Naive thymus-derived CD4-positive, alpha-beta T cell (primary cell): ENCODE measurements at regions of chr22 and their contacts with region 1.

Region 1: GRCh38 chr22:36387752-36388518 is at the start of gene MYH9:
- DNase-seq: peak; percentile 93 to 99 (median 99)
- ATAC-seq: peak; percentile 93
- H3K4me3 ChIP-seq: peak within 1 kb of the TSS; percentile 97
- H3K4me3 Mint-ChIP-seq: peak within 1 kb of the TSS; percentile 87 to 99 (median 93)
- H3K27ac ChIP-seq: peak within 1 kb of the TSS; percentile 86
- H3K27ac Mint-ChIP-seq: peak within 1 kb of the TSS; percentile 93 to 97 (median 94)
- H3K4me1 ChIP-seq: peaks cover 20 to 21% of the 10 kb centered on the region in 2 donors
- H3K4me1 Mint-ChIP-seq: peaks cover 18 to 48% (median 35%) of the 10 kb centered on the region in 7 donors
- H3K27me3 ChIP-seq: no peaks in the 10 kb centered on the region
- H3K27me3 Mint-ChIP-seq: no peaks in the 10 kb centered on the region
- total RNA-seq, gene MYH9: 650 to 900 (median 803) TPM

Region 2: DNA sequence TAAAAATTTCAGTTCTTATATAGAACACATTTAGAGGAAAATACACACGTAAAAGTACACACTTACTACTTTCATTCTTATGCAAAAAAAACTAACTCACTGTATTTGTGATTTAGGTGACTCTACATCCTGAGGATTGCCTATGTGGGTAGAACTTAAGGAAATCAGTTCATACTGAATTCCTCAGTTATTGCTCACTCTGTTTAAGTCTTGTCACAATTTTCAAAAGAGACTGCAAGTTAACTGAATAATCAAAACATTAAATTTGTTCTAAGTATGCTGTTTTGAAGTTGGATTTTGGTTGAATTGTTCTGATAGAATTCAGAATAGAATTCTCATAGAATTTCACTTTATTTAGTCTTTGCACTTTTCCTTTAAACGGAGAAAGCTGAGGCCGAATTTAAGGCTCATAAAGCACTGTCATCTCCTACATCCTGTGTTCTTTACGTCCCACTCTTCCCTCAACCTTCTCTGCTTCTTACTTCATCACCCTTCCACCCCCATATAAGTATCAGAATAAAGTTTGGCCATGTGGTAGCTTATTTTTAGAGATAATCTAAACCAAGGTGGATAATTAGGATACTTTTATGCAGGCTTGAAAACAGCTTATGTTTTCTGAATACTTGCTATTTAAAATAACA is 610.5 kb before region 1 on chr22:
- CTCF ChIA-PET with region 1: no interaction called
- POLR2A ChIA-PET with region 1: no interaction called
- intact Hi-C with region 1: no loop called
- DNase-seq: no peak
- ATAC-seq: no peak
- H3K4me3 ChIP-seq: no peak overlapping the region
- H3K4me3 Mint-ChIP-seq: no peak overlapping the region
- H3K27ac ChIP-seq: no peak overlapping the region
- H3K27ac Mint-ChIP-seq: no peak overlapping the region
- H3K4me1 ChIP-seq: no peaks in the 10 kb centered on the region
- H3K4me1 Mint-ChIP-seq: no peaks in the 10 kb centered on the region
- H3K27me3 ChIP-seq: no peaks in the 10 kb centered on the region
- H3K27me3 Mint-ChIP-seq: peaks cover 0 to 17% (median 0%) of the 10 kb centered on the region in 5 donors

Region 3: GRCh38 chr22:36239401-36240171 is 148.3 kb before region 1 on chr22 and contains the start of gene APOL2:
- CTCF ChIA-PET with region 1: no interaction called
- POLR2A ChIA-PET with region 1: no interaction called
- intact Hi-C with region 1: loop called in 1 of 2 experiments (anchors 5 kb)
- DNase-seq: peak; percentile 52 to 88 (median 79)
- ATAC-seq: peak; percentile 99
- H3K4me3 ChIP-seq: peak within 1 kb of the TSS; percentile 94
- H3K4me3 Mint-ChIP-seq: peak within 1 kb of the TSS; percentile 93 to 99 (median 99)
- H3K27ac ChIP-seq: peak within 1 kb of the TSS; percentile 76
- H3K27ac Mint-ChIP-seq: peak within 1 kb of the TSS; percentile 94 to 99 (median 98)
- H3K4me1 ChIP-seq: peaks cover 23 to 33% of the 10 kb centered on the region in 2 donors
- H3K4me1 Mint-ChIP-seq: peaks cover 44 to 55% (median 53%) of the 10 kb centered on the region in 7 donors
- H3K27me3 ChIP-seq: no peaks in the 10 kb centered on the region
- H3K27me3 Mint-ChIP-seq: peaks cover 0 to 10% (median 0%) of the 10 kb centered on the region in 5 donors
- total RNA-seq, gene APOL2: 30.1 to 133 (median 66.9) TPM

Region 4: DNA sequence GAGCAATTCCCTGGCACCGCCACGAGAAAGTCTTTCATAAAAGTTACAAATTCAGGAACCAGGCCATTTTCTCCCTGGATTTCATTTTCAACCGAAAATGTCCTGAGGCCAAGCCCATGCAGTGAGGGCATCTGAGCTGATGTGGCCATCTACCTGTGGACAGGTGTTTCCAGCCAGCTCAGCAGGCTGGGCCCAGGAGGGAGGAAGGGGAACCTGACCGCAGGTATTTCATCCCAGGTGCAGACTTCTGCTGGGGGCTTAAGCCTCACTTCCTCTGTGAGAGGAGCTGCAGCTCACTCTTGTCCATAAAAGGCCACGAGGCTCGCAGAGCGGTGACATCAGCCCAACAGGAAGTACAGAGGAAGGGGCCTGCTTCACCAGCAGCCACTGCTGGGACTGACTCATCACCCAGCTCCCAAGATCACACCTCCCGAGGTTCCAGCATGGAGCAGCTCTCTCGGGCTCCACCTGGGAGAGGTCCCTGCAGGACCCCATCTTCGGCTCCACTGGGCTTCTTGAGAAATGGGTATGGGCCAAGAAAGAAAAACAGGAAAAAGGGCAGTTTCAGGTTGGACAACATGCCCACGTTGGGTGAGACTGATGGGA is 56.5 kb before region 1 on chr22:
- CTCF ChIA-PET with region 1: interaction called, 10 read pairs
- POLR2A ChIA-PET with region 1: interaction called, 1,512 read pairs
- intact Hi-C with region 1: loop called (anchors 1 kb)
- DNase-seq: peak; percentile 42 to 83 (median 73)
- ATAC-seq: peak; percentile 78
- H3K4me3 ChIP-seq: peak overlapping the region; percentile 57
- H3K4me3 Mint-ChIP-seq: peak overlapping the region; percentile 83 to 95 (median 92)
- H3K27ac ChIP-seq: peak overlapping the region; percentile 82
- H3K27ac Mint-ChIP-seq: peak overlapping the region; percentile 96 to 100 (median 99)
- H3K4me1 ChIP-seq: peaks cover 87 to 92% of the 10 kb centered on the region in 2 donors
- H3K4me1 Mint-ChIP-seq: peaks cover 84 to 100% (median 98%) of the 10 kb centered on the region in 7 donors
- H3K27me3 ChIP-seq: no peaks in the 10 kb centered on the region
- H3K27me3 Mint-ChIP-seq: no peaks in the 10 kb centered on the region

Region 5: DNA sequence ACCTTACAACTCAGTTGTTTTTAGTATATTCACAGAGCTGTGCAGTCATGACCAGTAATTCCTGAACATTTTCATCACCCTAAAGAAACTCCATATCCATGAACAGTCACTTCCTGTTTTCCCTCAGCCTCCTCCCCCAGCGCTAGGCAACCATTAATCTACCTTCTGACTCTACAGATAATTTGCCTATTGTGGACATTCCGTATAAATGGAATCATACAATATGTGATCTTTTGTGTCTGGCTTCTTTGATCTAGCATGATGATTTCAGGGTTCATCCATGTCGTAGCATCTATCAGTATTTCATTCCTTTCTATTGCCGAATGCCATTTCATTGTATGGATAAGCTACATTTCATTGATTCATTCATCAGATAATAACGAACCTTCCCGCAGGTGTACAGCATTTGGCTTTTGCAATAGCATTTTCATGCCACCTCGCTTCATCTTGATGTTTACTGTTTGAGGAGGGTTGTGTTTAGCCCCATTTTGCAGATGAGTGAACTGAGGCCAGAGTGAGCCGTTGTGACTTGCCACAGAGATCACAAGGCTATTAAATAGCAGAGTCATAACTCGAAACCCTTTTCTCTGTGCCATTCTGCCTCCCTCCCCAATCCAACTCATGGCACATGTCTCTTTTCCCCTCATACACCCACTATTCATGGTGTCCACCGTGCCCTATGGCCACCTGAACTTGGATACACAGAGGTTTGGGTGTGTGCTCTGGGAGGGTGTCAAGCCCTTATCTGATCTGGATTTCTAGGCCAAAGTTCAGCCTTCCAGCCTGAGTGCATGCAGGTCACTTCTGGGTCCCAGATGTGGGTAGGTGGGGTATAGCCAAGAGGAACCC is 10.9 kb after region 1 on chr22:
- CTCF ChIA-PET with region 1: no interaction called
- POLR2A ChIA-PET with region 1: interaction called, 15 read pairs
- intact Hi-C with region 1: loop called in 1 of 2 experiments (anchors 1 kb)
- DNase-seq: no peak
- ATAC-seq: no peak
- H3K4me3 ChIP-seq: no peak overlapping the region
- H3K4me3 Mint-ChIP-seq: peak overlapping the region in 1 of 10 donors; percentile 31
- H3K27ac ChIP-seq: no peak overlapping the region
- H3K27ac Mint-ChIP-seq: peak overlapping the region in 4 of 9 donors; percentile 6 to 33 (median 17)
- H3K4me1 ChIP-seq: peaks cover 5 to 14% of the 10 kb centered on the region in 2 donors
- H3K4me1 Mint-ChIP-seq: peaks cover 21 to 33% (median 28%) of the 10 kb centered on the region in 7 donors
- H3K27me3 ChIP-seq: no peaks in the 10 kb centered on the region
- H3K27me3 Mint-ChIP-seq: no peaks in the 10 kb centered on the region

Region 6: GRCh38 chr22:36454916-36455570 is 67.1 kb after region 1 on chr22:
- CTCF ChIA-PET with region 1: no interaction called
- POLR2A ChIA-PET with region 1: interaction called, 13 read pairs
- intact Hi-C with region 1: loop called (anchors 1 kb)
- DNase-seq: peak; percentile 87 to 97 (median 92)
- ATAC-seq: peak; percentile 83
- H3K4me3 ChIP-seq: peak overlapping the region; percentile 83
- H3K4me3 Mint-ChIP-seq: peak overlapping the region; percentile 68 to 87 (median 78)
- H3K27ac ChIP-seq: peak overlapping the region; percentile 99
- H3K27ac Mint-ChIP-seq: peak overlapping the region; percentile 71 to 99 (median 96)
- H3K4me1 ChIP-seq: peaks cover 46 to 48% of the 10 kb centered on the region in 2 donors
- H3K4me1 Mint-ChIP-seq: peaks cover 21 to 54% (median 45%) of the 10 kb centered on the region in 7 donors
- H3K27me3 ChIP-seq: no peaks in the 10 kb centered on the region
- H3K27me3 Mint-ChIP-seq: no peaks in the 10 kb centered on the region

Region 7: DNA sequence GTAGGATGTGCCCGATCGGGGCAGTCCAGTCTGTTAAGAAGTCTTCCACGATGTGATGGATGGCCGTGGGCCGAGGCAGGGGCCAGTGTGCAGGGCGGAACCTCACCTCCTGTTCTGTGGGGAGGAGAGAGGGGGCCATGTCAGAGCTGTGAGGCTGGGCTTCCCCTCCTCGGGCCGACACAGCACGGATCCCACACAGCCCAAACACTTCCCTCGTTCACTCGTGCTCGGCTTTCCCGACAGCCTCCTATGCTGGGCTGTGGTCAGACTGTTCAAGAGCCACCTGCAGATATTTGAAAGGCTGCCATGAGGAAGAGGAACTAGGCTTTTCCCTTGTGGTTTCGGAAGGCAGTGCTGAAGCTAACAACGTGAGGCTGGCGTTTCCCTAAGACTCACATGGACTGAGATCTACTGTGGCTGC is 105.8 kb after region 1 on chr22:
- CTCF ChIA-PET with region 1: no interaction called
- POLR2A ChIA-PET with region 1: no interaction called
- intact Hi-C with region 1: no loop called
- DNase-seq: no peak
- ATAC-seq: peak; percentile 87
- H3K4me3 ChIP-seq: no peak overlapping the region
- H3K4me3 Mint-ChIP-seq: peak overlapping the region in 5 of 10 donors; percentile 9 to 52 (median 25)
- H3K27ac ChIP-seq: no peak overlapping the region
- H3K27ac Mint-ChIP-seq: peak overlapping the region in 2 of 9 donors; percentile 21 to 43
- H3K4me1 ChIP-seq: peaks cover 0 to 3% of the 10 kb centered on the region in 2 donors
- H3K4me1 Mint-ChIP-seq: peaks cover 0 to 11% (median 6%) of the 10 kb centered on the region in 7 donors
- H3K27me3 ChIP-seq: no peaks in the 10 kb centered on the region
- H3K27me3 Mint-ChIP-seq: no peaks in the 10 kb centered on the region

Region 8: DNA sequence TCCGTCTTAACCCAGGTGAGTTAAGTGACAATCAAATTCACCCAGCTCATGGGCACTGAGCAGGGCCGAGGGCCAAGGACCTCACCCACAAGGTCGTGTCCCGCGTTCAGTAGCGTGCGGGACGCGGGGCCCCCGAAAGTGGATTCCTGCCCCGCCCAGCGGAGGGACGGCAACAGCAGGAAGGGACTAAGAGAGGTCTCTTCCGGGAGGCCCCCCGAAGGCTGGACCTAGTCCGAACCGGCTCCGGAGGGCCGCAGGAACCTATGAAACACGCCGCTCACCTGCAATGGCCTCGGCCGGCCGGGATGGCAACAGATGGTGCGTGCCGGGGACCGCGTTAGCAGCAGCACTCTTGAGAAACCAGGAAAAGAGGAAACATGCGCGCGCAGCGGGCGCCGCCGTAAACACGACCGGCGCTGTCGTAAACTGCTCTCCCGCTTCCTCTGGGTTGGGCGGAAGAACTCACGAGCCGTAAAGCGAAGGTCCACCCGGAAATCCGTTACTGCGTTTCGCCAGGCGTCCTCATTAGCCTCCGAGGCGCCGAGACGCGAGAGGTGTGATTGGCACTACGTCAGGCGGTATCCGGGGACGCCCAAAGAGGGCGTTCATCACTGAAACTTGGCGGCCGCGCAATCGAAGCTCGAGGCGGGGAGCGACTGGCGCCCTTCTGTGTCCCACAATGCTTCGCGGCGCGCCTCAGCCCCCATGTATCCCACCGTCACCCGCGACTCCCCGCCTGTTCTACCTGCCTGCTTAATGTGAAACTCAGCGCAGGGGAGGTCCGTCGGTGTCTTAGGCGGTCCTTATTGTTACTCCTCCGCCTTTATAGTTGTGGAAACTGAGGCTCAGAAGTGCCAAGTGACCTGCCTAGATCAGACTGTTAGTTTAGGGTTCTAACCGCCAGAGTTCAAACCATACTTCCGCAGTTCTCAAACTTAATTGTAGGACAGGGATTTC is 141.1 kb after region 1 on chr22 and contains the start of gene EIF3D:
- CTCF ChIA-PET with region 1: no interaction called
- POLR2A ChIA-PET with region 1: no interaction called
- intact Hi-C with region 1: loop called (anchors 1 to 2 kb)
- DNase-seq: peak; percentile 93 to 100 (median 99)
- ATAC-seq: peak; percentile 94
- H3K4me3 ChIP-seq: peak within 1 kb of the TSS; percentile 84
- H3K4me3 Mint-ChIP-seq: peak within 1 kb of the TSS; percentile 78 to 98 (median 96)
- H3K27ac ChIP-seq: peak within 1 kb of the TSS; percentile 92
- H3K27ac Mint-ChIP-seq: peak within 1 kb of the TSS; percentile 94 to 99 (median 98)
- H3K4me1 ChIP-seq: peaks cover 4 to 12% of the 10 kb centered on the region in 2 donors
- H3K4me1 Mint-ChIP-seq: peaks cover 11 to 23% (median 21%) of the 10 kb centered on the region in 7 donors
- H3K27me3 ChIP-seq: no peaks in the 10 kb centered on the region
- H3K27me3 Mint-ChIP-seq: peaks cover 0 to 4% (median 0%) of the 10 kb centered on the region in 5 donors
- total RNA-seq, gene EIF3D: 220 to 257 (median 232) TPM